Activated naive CD4-positive, alpha-beta T cell treated with anti-CD3 and anti-CD28 coated beads, Interleukin-2, amount 10 ng/mL, durations not matched to agents 7 days and 5 days (primary cell): ENCODE measurements at regions of chr14 and their contacts with region 1.

Region 1: DNA sequence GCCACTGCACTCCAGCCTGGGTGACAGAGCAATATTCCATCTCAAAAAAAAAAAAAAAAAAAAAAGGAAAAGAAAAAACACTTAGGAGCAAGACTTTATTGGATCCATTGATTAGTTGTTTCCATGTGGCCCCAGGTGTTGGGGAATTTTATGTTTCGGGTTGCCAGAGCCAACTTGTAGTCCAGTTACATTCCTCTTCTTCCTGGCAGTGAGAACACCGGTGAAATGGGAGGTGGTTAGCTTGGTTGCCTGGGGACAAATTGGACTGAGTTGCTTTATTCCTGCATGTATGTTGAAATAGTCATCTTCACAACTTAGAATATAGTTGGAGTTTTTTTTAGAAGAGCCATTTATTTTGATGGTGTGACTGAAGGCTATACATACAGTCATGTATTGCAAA is 12.6 kb downstream of the RCOR1 start:
- DNase-seq: no peak
- H3K4me3 Mint-ChIP-seq: no peak overlapping the region
- H3K27ac Mint-ChIP-seq: no peak overlapping the region
- H3K4me1 Mint-ChIP-seq: peaks cover 10% of the 10 kb centered on the region
- H3K27me3 Mint-ChIP-seq: no peaks in the 10 kb centered on the region

Region 2: GRCh38 chr14:102593062-102593824 is 11.8 kb before region 1 on chr14:
- CTCF ChIA-PET with region 1: interaction called, 16 read pairs
- DNase-seq: peak; percentile 72
- H3K4me3 Mint-ChIP-seq: peak overlapping the region; percentile 91
- H3K27ac Mint-ChIP-seq: peak overlapping the region; percentile 76
- H3K4me1 Mint-ChIP-seq: peaks cover 36% of the 10 kb centered on the region
- H3K27me3 Mint-ChIP-seq: peaks cover 15% of the 10 kb centered on the region